ENCODE measurements at regions of chr12 and their contacts with region 1.

Region 1: DNA sequence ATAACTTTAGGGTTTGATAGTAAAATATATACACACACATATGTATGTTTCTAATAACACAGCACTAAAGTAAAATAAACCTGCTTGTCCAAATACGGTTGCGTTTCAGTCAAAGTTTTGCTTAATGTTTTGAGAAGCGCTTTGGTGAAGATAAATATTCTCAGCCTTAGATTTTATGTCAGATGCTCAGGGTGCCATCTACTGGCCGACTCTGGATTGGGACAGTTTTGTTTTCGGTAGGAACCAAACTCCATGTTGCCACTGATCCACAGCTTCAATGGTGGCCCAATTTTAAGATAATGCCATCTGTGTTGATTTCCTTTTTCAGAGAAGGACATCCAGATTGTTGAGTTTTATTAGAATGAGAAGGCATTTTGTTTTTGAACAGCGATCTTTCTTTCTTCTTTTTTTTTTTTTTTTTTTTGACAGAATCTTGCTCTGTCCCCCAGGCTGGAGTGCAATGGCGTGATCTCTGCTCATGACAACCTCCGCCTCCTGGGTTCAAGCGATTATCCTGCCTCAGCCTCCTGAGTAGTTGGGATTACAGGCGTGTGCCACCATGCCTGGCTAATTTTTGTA is 43.1 kb downstream of the LLPH start:
- DNase-seq: peak; percentile 73 to 75
- H3K4me3 ChIP-seq: no peak overlapping the region
- H3K27ac ChIP-seq: no peak overlapping the region
- H3K4me1 ChIP-seq: peaks cover 0 to 9% (median 4%) of the 10 kb centered on the region in 4 donors
- H3K27me3 ChIP-seq: peaks cover 0 to 4% of the 10 kb centered on the region in 2 donors
- CTCF ChIP-seq: peak; percentile 72 to 73

Region 2: GRCh38 chr12:65556681-65557437 is 530.6 kb before region 1 on chr12:
- intact Hi-C with region 1: loop called (anchors 2 kb)
- DNase-seq: peak; percentile 77 to 82
- H3K4me3 ChIP-seq: no peak overlapping the region
- H3K27ac ChIP-seq: no peak overlapping the region
- H3K4me1 ChIP-seq: peaks cover 0 to 9% (median 0%) of the 10 kb centered on the region in 4 donors
- H3K27me3 ChIP-seq: peaks cover 0 to 9% of the 10 kb centered on the region in 2 donors
- CTCF ChIP-seq: peak; percentile 87 to 92

Measured in tibial artery (tissue), 4 donors.